ENCODE measurements at regions of chr1 and their contacts with region 1.

Region 1: GRCh38 chr1:28602536-28603439 is 10.7 kb downstream of the RAB42 start:
- DNase-seq: peak; percentile 88
- H3K4me3 ChIP-seq: no peak overlapping the region
- H3K27ac ChIP-seq: peak overlapping the region; percentile 67
- H3K4me1 ChIP-seq: peaks cover 17% of the 10 kb centered on the region
- H3K27me3 ChIP-seq: no peaks in the 10 kb centered on the region

Region 2: DNA sequence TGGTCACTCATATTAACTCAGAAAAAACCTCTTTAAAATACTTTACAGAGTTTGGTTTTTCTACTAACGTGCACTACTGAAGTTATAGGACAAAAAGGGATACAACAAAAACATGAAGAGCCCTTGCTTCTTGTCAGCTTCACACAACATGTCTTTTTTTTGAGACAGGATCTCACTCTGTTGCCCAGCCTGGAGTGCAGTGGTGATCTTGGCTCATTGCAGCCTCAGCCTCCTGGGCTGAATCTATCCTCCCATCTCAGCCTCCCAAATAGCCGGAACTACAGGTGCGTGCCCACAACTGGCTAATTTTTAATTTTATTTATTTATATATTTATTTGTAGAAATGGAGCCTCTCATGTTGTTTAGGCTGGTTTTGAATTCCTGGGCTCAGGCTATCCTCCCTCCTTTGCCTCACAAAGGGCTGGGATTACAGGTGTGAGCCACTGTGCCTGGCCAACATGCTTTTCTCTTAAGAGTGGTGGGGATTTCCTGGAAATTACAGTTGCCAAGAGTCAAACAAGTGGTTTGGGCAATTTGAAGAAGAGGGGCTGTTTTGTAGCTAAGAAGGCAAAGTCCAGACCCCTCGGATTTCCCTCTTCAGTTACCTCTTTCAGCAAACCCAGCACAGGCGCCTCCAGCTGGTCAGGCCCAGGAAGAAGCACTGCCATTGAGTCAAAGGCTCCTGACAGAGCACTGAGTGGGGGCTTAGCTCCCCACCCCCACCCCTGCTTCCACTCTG is 674.4 kb before region 1 on chr1:
- in situ Hi-C with region 1: no loop called
- DNase-seq: no peak
- H3K4me3 ChIP-seq: no peak overlapping the region
- H3K27ac ChIP-seq: no peak overlapping the region
- H3K4me1 ChIP-seq: peaks cover under 1% of the 10 kb centered on the region; the same call in 1 of the 2 replicates
- H3K27me3 ChIP-seq: no peaks in the 10 kb centered on the region

Region 3: GRCh38 chr1:28417429-28417922 is 185.3 kb before region 1 on chr1:
- in situ Hi-C with region 1: loop called (anchors 25 kb)
- DNase-seq: peak; percentile 92
- H3K4me3 ChIP-seq: peak overlapping the region; percentile 46
- H3K27ac ChIP-seq: peak overlapping the region; percentile 80
- H3K4me1 ChIP-seq: peaks cover 31% of the 10 kb centered on the region
- H3K27me3 ChIP-seq: no peaks in the 10 kb centered on the region

Region 4: DNA sequence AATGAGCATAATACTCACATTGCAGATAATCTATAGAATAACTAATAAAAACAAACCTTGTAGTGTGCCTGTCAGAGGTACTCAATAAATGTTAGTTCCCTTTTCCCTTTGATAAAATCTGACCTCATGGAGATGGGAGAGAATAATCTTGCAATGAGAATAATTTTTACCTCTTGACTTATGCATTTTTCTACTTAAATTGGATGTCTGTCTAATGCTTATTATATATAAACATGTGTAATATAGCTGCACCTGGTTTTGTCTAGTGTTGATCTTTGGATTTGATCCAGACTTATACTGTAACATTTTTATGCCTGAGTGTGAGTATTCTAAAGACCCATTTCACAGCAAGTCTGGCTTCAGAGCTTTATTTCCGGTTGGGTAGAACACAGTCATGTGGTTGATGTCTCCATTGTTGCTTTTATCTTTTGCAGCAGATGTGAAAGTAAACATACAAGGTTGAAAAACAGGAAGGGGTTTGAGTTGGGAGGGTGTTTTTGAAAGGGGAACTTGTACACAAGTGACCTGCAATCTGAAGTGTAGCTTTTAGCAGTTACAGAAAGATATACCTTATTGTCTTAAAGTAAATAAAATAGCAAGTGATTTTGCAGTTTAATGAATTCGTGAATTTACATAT is 324.0 kb after region 1 on chr1:
- in situ Hi-C with region 1: no loop called
- DNase-seq: no peak
- H3K4me3 ChIP-seq: no peak overlapping the region
- H3K27ac ChIP-seq: no peak overlapping the region
- H3K4me1 ChIP-seq: peaks cover 12% of the 10 kb centered on the region
- H3K27me3 ChIP-seq: no peaks in the 10 kb centered on the region